Activated naive CD4-positive, alpha-beta T cell treated with anti-CD3 and anti-CD28 coated beads for 36 hours (primary cell): ENCODE measurements at regions of chr1 and their contacts with region 1.

Region 1: DNA sequence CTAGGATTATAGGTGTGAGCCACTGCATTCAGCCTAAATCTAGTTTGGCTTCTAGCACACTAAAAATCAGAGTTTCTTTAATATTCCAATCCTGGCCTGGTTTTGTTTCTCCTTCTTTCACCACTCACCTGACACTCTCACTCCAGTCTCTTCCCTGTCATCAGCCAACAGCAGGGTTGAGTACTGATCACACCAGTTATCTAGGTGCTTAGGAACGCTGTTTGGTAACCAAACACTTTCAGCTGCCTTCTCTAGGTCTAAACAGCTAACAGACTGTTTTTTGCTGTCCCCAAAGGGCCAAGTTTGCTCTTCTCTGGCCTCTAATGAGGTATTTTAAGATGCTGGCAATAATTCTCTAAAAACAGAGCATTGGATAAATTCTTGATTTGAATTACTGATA is 17.7 kb upstream of the FRRS1 start:
- DNase-seq: no peak
- H3K4me3 Mint-ChIP-seq: no peak overlapping the region
- H3K27ac Mint-ChIP-seq: no peak overlapping the region
- H3K4me1 Mint-ChIP-seq: peaks cover 14% of the 10 kb centered on the region
- H3K27me3 Mint-ChIP-seq: peaks cover 35% of the 10 kb centered on the region

Region 2: DNA sequence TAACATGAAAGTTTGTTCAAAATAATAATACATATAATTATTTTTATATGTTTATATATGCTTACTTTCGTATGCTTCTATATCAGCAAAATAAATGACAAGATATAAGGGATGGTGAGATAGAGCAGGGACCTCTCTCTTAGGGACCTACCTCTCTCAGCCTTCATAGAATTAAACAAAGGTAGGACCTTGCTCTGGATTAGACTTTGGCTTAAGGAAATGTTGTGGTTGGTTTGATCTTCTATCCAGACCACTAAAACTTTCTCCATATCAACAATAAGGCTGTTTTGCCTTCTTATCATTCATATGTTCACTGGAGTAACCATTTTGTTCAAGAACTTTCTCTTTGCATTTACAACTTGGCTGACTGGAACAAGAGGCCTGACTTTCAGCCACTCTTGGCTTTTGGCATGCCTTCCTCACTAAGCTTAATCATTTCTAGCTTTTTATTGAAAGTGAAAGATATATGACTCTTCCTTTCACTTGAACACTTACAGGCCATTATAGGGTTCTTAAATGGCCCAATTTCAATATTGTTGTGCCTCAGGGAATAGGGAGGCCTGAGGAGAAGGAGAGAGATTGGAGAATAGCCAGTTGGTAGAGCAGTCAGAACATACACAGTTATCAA is 32.2 kb before region 1 on chr1:
- CTCF ChIA-PET with region 1: interaction called, 3 read pairs
- intact Hi-C with region 1: loop called (anchors 2 kb)
- DNase-seq: peak; percentile 41
- H3K4me3 Mint-ChIP-seq: no peak overlapping the region
- H3K27ac Mint-ChIP-seq: no peak overlapping the region
- H3K4me1 Mint-ChIP-seq: peaks cover 15% of the 10 kb centered on the region
- H3K27me3 Mint-ChIP-seq: peaks cover 6% of the 10 kb centered on the region